CD4-positive, alpha-beta memory T cell (primary cell): ENCODE measurements at regions of chr19 and their contacts with region 1.

Region 1: DNA sequence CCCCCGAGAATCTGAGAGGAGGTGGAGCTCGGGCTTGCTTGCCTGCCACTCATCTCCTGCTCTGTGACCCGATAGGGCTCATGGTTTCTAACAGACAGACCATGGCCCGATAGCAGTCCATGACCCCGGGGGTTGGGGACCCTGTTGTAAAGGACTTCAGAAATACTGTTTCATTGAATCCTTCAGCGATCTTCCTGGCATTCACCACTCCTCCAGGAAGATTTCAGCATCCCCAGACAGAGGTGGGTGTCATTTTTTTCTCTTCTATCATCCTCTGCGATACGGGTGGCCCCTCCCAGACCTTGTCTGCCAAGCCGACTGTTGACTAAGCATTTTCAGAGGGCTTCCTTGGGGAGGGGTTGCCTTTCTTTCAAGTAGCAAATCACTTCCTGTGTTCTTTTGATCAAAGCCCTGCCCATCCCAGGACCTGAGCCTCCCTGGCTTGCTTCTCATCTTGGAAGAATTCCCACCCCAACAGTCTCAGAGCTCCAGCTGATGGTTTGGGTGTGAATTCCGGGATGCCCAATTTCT is 1.7 kb downstream of the MYO1F start:
- DNase-seq: peak; percentile 61 to 82 (median 72)
- H3K4me3 ChIP-seq: peak overlapping the region; percentile 78 to 93
- H3K4me3 Mint-ChIP-seq: peak overlapping the region; percentile 91 to 99 (median 98)
- H3K27ac ChIP-seq: peak overlapping the region; percentile 58
- H3K27ac Mint-ChIP-seq: peak overlapping the region; percentile 92 to 99 (median 94)
- H3K4me1 ChIP-seq: peaks cover 80% of the 10 kb centered on the region
- H3K4me1 Mint-ChIP-seq: peaks cover 40 to 97% (median 63%) of the 10 kb centered on the region in 4 donors
- H3K27me3 ChIP-seq: no peaks in the 10 kb centered on the region
- H3K27me3 Mint-ChIP-seq: no peaks in the 10 kb centered on the region

Region 2: GRCh38 chr19:8585894-8586750 is 10.6 kb after region 1 on chr19:
- CTCF ChIA-PET with region 1: interaction called, 179 read pairs
- POLR2A ChIA-PET with region 1: interaction called, 14 read pairs
- intact Hi-C with region 1: no loop called
- DNase-seq: peak; percentile 49 to 59 (median 53)
- H3K4me3 ChIP-seq: no peak overlapping the region
- H3K4me3 Mint-ChIP-seq: no peak overlapping the region
- H3K27ac ChIP-seq: no peak overlapping the region
- H3K27ac Mint-ChIP-seq: peak overlapping the region in 1 of 7 donors; percentile 42
- H3K4me1 ChIP-seq: peaks cover under 1% of the 10 kb centered on the region
- H3K4me1 Mint-ChIP-seq: peaks cover 0 to 5% (median 2%) of the 10 kb centered on the region in 4 donors
- H3K27me3 ChIP-seq: no peaks in the 10 kb centered on the region
- H3K27me3 Mint-ChIP-seq: no peaks in the 10 kb centered on the region

Region 3: DNA sequence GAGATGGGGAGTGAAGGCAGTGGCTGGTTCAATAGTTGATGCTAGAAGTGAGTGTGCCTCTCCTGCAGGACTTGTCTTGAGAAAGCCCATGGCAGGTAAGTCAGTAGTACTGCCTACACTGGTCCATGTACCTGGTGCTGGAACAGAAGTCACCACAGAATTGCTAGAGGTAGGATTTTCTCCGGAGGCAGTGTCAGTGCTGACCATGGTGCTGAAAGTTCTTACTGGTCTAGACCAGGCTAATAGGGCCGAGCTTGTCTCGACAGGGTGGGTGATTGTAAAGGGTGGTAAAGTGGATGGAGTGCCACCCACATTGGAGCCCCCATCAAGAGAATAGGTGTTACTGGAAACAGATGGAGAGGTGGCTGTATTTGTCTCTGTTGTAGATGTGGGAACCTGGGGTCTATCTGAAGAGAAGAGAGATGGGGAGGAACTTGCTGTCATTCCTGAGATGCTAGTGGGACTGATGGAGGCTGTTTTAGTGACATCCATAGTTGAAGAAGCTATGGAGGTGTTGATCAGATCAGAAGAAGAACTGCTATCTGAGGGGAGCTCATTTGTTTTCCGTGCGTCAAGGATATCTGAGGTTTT is 398.1 kb after region 1 on chr19:
- CTCF ChIA-PET with region 1: no interaction called
- POLR2A ChIA-PET with region 1: no interaction called
- intact Hi-C with region 1: no loop called
- DNase-seq: peak in 2 of 5 donors; percentile 2 to 12
- H3K4me3 ChIP-seq: no peak overlapping the region
- H3K4me3 Mint-ChIP-seq: no peak overlapping the region
- H3K27ac ChIP-seq: no peak overlapping the region
- H3K27ac Mint-ChIP-seq: no peak overlapping the region
- H3K4me1 ChIP-seq: no peaks in the 10 kb centered on the region
- H3K4me1 Mint-ChIP-seq: no peaks in the 10 kb centered on the region
- H3K27me3 ChIP-seq: no peaks in the 10 kb centered on the region
- H3K27me3 Mint-ChIP-seq: peaks cover 10 to 20% of the 10 kb centered on the region in 2 donors

Region 4: DNA sequence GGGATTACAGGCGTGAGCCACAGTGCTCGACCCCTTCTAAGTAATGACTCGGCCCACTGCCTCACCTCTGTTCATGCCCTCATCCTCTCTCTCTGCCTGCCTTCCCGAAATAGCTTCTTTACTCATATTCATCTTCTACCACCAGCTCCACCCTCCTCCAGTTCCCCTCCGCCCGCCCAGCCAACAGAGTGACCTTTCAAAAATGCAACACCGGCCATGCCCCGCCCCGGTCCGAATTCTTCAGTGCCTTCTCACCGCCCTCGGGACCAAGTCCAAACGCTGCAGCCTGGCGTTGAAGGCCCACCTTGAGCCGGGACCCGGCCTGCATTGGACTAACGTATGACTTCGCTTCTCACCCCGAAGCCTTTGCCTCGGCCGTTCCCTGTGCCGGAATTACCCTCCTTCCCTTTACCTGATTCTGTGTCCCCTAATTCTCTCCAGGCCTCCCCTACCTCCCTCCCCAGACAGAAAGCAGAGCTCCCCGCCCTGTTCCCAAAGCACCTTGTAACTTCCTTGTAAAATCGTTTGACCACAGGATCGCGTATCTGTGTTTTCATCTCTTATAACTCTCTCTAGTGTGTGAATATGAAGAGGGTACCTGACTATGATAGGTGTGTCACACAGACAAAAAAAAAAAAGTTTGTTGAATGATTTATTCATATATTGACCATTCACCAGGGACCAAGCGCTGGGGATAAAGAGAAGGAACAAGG is 442.8 kb after region 1 on chr19:
- CTCF ChIA-PET with region 1: no interaction called
- POLR2A ChIA-PET with region 1: no interaction called
- intact Hi-C with region 1: no loop called
- DNase-seq: no peak
- H3K4me3 ChIP-seq: no peak overlapping the region
- H3K4me3 Mint-ChIP-seq: no peak overlapping the region
- H3K27ac ChIP-seq: no peak overlapping the region
- H3K27ac Mint-ChIP-seq: no peak overlapping the region
- H3K4me1 ChIP-seq: no peaks in the 10 kb centered on the region
- H3K4me1 Mint-ChIP-seq: no peaks in the 10 kb centered on the region
- H3K27me3 ChIP-seq: no peaks in the 10 kb centered on the region
- H3K27me3 Mint-ChIP-seq: peaks cover 2 to 5% of the 10 kb centered on the region in 2 donors